ENCODE measurements at regions of chr4 and their contacts with region 1.

Region 1: GRCh38 chr4:39044364-39044955 is 12.3 kb upstream of the TMEM156 start:
- DNase-seq: peak; percentile 93 to 96
- ATAC-seq: peak; percentile 88 to 95 (median 92)
- H3K4me3 ChIP-seq: peak overlapping the region; percentile 59 to 98 (median 70)
- H3K27ac ChIP-seq: peak overlapping the region; percentile 76 to 98 (median 95)
- H3K4me1 ChIP-seq: peaks cover 0 to 56% (median 42%) of the 10 kb centered on the region in 9 donors
- H3K27me3 ChIP-seq: no peaks in the 10 kb centered on the region
- CTCF ChIP-seq: peak in 1 of 9 donors; percentile 34

Region 2: GRCh38 chr4:38782452-38783108 is 261.9 kb before region 1 on chr4 and contains the start of gene TLR10:
- intact Hi-C with region 1: no loop called
- DNase-seq: peak in 1 of 2 donors; percentile 48
- ATAC-seq: peak in 6 of 8 donors; percentile 37 to 67 (median 59)
- H3K4me3 ChIP-seq: no peak within 1 kb of the TSS
- H3K27ac ChIP-seq: no peak within 1 kb of the TSS
- H3K4me1 ChIP-seq: peaks cover 0 to 32% (median 0%) of the 10 kb centered on the region in 9 donors
- H3K27me3 ChIP-seq: no peaks in the 10 kb centered on the region
- CTCF ChIP-seq: peak; percentile 64 to 80 (median 74)
- total RNA-seq, gene TLR10: 0.06 to 0.39 (median 0.11) TPM in 4 of 10 donors, not detected in the others

Region 3: DNA sequence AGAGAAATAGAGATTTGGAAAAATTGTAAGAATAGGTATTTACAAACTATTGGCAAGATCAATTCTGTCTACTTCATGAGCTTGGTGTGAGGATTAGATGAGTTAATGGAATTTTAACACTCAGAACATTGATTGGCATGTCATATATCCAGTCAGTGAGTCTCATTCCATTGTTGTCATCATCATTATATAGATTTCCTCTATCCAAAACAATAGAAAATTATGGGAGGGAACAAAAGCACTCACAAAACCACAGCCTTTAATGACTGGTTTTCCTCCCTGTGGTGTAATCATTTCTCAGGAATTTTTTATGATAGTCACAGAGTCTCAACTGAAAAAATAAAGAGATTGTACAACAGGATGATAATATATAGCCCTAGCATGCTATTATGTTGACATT is 38.7 kb after region 1 on chr4:
- intact Hi-C with region 1: no loop called
- DNase-seq: no peak
- ATAC-seq: no peak
- H3K4me3 ChIP-seq: no peak overlapping the region
- H3K27ac ChIP-seq: no peak overlapping the region
- H3K4me1 ChIP-seq: no peaks in the 10 kb centered on the region
- H3K27me3 ChIP-seq: no peaks in the 10 kb centered on the region
- CTCF ChIP-seq: no peak

Region 4: GRCh38 chr4:39124885-39125599 is 80.6 kb after region 1 on chr4:
- intact Hi-C with region 1: loop called in 2 of 10 experiments (anchors 10 kb)
- DNase-seq: no peak
- ATAC-seq: no peak
- H3K4me3 ChIP-seq: no peak overlapping the region
- H3K27ac ChIP-seq: no peak overlapping the region
- H3K4me1 ChIP-seq: no peaks in the 10 kb centered on the region
- H3K27me3 ChIP-seq: no peaks in the 10 kb centered on the region
- CTCF ChIP-seq: no peak

Region 5: GRCh38 chr4:39181905-39182638 is 137.6 kb after region 1 on chr4 and contains the start of gene WDR19:
- intact Hi-C with region 1: loop called in 3 of 10 experiments (anchors 2 to 10 kb)
- DNase-seq: peak; percentile 98
- ATAC-seq: peak; percentile 99 to 100 (median 100)
- H3K4me3 ChIP-seq: peak within 1 kb of the TSS; percentile 62 to 93 (median 73)
- H3K27ac ChIP-seq: peak within 1 kb of the TSS; percentile 28 to 84 (median 60)
- H3K4me1 ChIP-seq: peaks cover 0 to 18% (median 10%) of the 10 kb centered on the region in 9 donors
- H3K27me3 ChIP-seq: no peaks in the 10 kb centered on the region
- CTCF ChIP-seq: peak; percentile 11 to 71 (median 48)
- total RNA-seq, gene WDR19: 4.1 to 14.6 (median 6.7) TPM

Measured in heart right ventricle (tissue), 16 donors.